ENCODE measurements at regions of chr1 and their contacts with region 1.

Region 1: GRCh38 chr1:23559136-23559984 is at the start of gene ID3:
- DNase-seq: peak; percentile 90
- ATAC-seq: peak; percentile 75
- H3K4me3 Mint-ChIP-seq: peak within 1 kb of the TSS; percentile 87
- H3K27ac Mint-ChIP-seq: peak within 1 kb of the TSS; percentile 95
- H3K4me1 Mint-ChIP-seq: peaks cover 80% of the 10 kb centered on the region
- H3K27me3 Mint-ChIP-seq: no peaks in the 10 kb centered on the region
- CTCF ChIP-seq: no peak
- total RNA-seq, gene ID3: 195 and 205 TPM in 2 replicates

Region 2: GRCh38 chr1:23548704-23549143 is 10.6 kb before region 1 on chr1:
- CTCF ChIA-PET with region 1: interaction called, 14 read pairs
- POLR2A ChIA-PET with region 1: interaction called, 520 read pairs
- intact Hi-C with region 1: loop called (anchors 2 kb)
- DNase-seq: no peak
- ATAC-seq: peak; percentile 67
- H3K4me3 Mint-ChIP-seq: no peak overlapping the region
- H3K27ac Mint-ChIP-seq: peak overlapping the region; percentile 75
- H3K4me1 Mint-ChIP-seq: peaks cover 38% of the 10 kb centered on the region
- H3K27me3 Mint-ChIP-seq: no peaks in the 10 kb centered on the region
- CTCF ChIP-seq: no peak

Region 3: GRCh38 chr1:23585447-23586015 is 26.2 kb after region 1 on chr1:
- CTCF ChIA-PET with region 1: interaction called, 21 read pairs
- POLR2A ChIA-PET with region 1: interaction called, 1,151 read pairs
- intact Hi-C with region 1: no loop called
- DNase-seq: no peak
- ATAC-seq: no peak
- H3K4me3 Mint-ChIP-seq: no peak overlapping the region
- H3K27ac Mint-ChIP-seq: no peak overlapping the region
- H3K4me1 Mint-ChIP-seq: peaks cover 44% of the 10 kb centered on the region
- H3K27me3 Mint-ChIP-seq: no peaks in the 10 kb centered on the region
- CTCF ChIP-seq: no peak

Region 4: DNA sequence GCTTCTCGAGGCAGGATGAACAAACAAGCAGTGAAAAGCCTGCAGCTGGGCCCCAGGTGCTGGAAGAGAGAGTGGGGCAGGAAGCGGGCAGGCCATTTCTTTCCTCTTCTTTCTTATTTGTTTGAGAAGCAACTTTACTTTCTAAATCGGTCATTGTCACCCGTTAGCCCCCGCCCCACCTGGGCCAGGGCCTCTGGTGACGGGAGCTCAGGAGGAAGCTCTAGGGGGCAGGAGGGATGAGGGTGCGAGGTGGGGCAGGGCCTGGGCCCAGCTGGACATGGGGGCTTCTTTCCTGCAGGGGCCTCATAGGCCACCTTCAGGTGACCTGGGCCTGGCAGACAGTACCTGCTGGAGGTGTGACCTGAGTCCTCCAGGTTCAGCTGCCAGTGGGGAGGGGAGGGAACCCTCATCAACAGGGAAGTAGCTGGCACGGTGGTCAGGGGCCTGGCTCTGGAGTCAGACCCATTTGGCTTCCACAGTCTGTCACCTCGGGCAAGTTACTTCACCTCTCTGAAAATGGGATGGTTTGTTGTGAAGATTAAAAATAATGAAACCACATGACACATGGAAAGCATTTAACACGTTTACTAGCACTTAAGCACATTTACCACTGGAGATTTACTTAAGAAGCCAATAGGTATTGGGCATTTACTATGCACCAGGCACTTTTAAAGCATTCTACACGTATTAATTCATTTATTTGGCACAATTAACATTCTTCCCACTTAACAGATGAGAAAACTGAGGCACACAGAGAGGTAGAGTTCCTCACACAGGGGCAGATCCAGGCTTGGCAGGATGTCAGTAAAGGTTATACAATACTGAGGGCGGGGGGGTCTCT is 54.1 kb after region 1 on chr1:
- CTCF ChIA-PET with region 1: interaction called, 4 read pairs
- POLR2A ChIA-PET with region 1: interaction called, 185 read pairs
- intact Hi-C with region 1: loop called (anchors 1 kb)
- DNase-seq: peak; percentile 44
- ATAC-seq: peak; percentile 38
- H3K4me3 Mint-ChIP-seq: no peak overlapping the region
- H3K27ac Mint-ChIP-seq: peak overlapping the region; percentile 92
- H3K4me1 Mint-ChIP-seq: peaks cover 85% of the 10 kb centered on the region
- H3K27me3 Mint-ChIP-seq: no peaks in the 10 kb centered on the region
- CTCF ChIP-seq: no peak

Region 5: GRCh38 chr1:23727362-23727827 is 168.0 kb after region 1 on chr1:
- CTCF ChIA-PET with region 1: no interaction called
- POLR2A ChIA-PET with region 1: interaction called, 7 read pairs
- intact Hi-C with region 1: loop called (anchors 10 kb)
- DNase-seq: no peak
- ATAC-seq: no peak
- H3K4me3 Mint-ChIP-seq: peak overlapping the region; percentile 70
- H3K27ac Mint-ChIP-seq: peak overlapping the region; percentile 89
- H3K4me1 Mint-ChIP-seq: peaks cover 73% of the 10 kb centered on the region
- H3K27me3 Mint-ChIP-seq: no peaks in the 10 kb centered on the region
- CTCF ChIP-seq: no peak